Activated B cell treated with CpG ODN at 0.5 μM for 24 hours (primary cell): ENCODE measurements at regions of chr1 and their contacts with region 1.

Region 1: DNA sequence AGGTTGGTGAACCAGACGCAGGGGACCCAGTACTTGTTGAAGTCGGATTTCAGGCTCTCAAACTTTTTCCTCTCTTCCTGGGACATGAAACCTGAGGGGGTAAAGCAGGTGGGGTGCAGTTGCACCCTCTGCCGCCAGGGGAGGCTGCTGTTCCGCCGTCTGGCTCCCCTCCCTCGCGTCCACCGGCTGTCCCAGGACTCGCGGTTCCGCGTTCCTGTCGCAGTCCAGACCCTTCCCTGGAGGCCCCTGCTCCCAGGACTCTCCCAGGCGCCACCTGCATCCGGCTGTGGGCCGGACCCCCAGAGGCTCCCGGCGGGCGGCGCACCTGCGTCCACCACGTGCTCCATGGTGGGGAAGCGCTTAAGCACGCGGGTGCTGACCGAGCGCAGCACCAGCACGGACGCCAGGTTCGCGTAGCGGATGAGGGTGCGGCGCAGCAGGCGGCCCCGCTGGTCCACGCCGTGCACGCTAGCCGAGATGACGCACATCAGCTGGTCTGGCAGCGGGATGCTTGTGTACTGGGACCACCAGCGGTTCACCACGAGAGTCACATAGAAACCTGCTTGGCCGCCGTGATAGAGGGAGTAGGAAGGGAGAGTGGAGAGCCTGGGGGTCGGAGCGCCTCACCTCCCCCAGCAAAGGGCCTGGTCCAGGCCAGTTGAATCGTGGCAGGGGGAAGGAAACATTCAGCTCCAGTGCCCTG is 1.7 kb downstream of the BEST4 start:
- DNase-seq: peak; percentile 81
- ATAC-seq: peak; percentile 79
- H3K4me3 Mint-ChIP-seq: peak overlapping the region; percentile 75
- H3K27ac Mint-ChIP-seq: peak overlapping the region; percentile 86
- H3K4me1 Mint-ChIP-seq: peaks cover 32% of the 10 kb centered on the region
- H3K27me3 Mint-ChIP-seq: no peaks in the 10 kb centered on the region
- CTCF ChIP-seq: peak; percentile 100

Region 2: GRCh38 chr1:44025816-44026215 is 760.5 kb before region 1 on chr1:
- CTCF ChIA-PET with region 1: no interaction called
- POLR2A ChIA-PET with region 1: no interaction called
- intact Hi-C with region 1: no loop called
- DNase-seq: no peak
- ATAC-seq: no peak
- H3K4me3 Mint-ChIP-seq: peak overlapping the region; percentile 41
- H3K27ac Mint-ChIP-seq: peak overlapping the region; percentile 81
- H3K4me1 Mint-ChIP-seq: peaks cover 38% of the 10 kb centered on the region
- H3K27me3 Mint-ChIP-seq: no peaks in the 10 kb centered on the region
- CTCF ChIP-seq: no peak

Region 3: GRCh38 chr1:44684525-44684924 is 101.8 kb before region 1 on chr1:
- CTCF ChIA-PET with region 1: no interaction called
- POLR2A ChIA-PET with region 1: no interaction called
- intact Hi-C with region 1: no loop called
- DNase-seq: no peak
- ATAC-seq: no peak
- H3K4me3 Mint-ChIP-seq: no peak overlapping the region
- H3K27ac Mint-ChIP-seq: no peak overlapping the region
- H3K4me1 Mint-ChIP-seq: peaks cover 8% of the 10 kb centered on the region
- H3K27me3 Mint-ChIP-seq: no peaks in the 10 kb centered on the region
- CTCF ChIP-seq: no peak

Region 4: DNA sequence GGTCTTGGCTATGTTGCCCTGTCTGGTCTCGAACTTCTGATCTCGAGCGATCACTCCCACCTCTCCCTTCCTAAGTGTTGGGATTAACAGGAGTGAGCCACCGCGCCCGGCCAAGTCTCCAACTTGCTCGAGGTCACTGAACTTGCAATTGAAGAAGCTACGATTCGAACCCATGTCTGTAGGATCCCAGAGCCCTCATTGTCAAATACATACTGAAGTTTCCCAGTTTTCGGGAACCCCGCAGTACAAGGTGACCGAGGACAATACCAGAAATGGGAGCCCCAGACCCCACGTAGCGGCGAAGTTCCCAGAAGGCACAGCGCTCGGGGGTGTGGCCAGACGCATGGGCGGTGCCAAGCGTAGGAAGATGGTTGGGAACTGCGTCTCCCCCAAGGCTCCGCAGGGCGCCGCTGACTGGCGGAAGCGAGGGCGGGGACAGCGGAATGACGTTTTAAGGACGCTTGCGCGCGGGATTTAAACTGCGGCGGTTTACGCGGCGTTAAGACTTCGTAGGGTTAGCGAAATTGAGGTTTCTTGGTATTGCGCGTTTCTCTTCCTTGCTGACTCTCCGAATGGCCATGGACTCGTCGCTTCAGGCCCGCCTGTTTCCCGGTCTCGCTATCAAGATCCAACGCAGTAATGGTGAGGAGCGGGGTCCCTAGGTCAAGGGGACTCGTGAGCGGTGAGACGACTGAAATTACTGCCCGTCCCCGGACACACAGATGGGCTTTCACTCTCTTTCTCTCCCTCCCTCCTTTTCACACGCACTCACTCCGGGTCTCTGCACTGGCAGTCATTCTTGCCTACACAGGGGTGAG is 46.7 kb before region 1 on chr1 and contains the start of gene KIF2C:
- CTCF ChIA-PET with region 1: no interaction called
- POLR2A ChIA-PET with region 1: interaction called, 11 read pairs
- intact Hi-C with region 1: loop called (anchors 2 kb)
- DNase-seq: peak; percentile 94
- ATAC-seq: peak; percentile 100
- H3K4me3 Mint-ChIP-seq: peak within 1 kb of the TSS; percentile 93
- H3K27ac Mint-ChIP-seq: peak within 1 kb of the TSS; percentile 90
- H3K4me1 Mint-ChIP-seq: peaks cover 15% of the 10 kb centered on the region
- H3K27me3 Mint-ChIP-seq: no peaks in the 10 kb centered on the region
- CTCF ChIP-seq: no peak
- total RNA-seq, gene KIF2C: 1.00 and 1.8 TPM in 2 replicates

Region 5: DNA sequence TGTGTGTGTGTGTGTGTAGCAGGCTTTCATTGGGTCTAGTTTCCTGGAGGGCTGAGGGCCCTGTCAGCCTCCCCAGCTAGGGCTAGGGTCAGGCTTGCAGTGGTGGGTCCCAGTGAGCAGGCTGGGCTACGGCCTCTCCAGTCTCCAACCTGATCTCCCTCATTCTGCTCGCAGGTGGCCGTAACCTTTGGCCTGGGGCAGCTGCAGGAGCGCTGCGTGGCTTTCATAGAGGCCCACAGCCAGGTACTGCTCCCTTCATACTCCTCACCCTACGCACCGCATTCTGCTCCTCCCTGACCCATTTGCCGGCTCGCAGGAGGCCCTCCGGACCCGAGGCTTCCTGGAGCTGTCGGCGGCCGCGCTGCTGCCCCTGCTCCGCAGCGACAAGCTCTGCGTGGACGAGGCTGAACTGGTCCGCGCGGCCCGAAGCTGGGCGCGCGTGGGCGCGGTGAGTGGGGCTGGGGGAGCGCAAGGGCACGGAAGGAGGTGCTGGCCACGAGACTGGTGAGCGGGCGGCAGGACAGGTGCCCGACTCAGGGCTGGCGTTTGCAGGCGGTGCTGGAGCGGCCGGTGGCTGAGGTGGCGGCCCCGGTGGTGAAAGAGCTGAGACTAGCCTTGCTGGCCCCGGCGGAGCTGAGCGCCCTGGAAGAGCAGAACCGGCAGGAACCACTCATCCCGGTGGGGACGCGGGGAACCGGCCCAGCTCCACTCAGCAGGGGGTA is 26.7 kb after region 1 on chr1:
- CTCF ChIA-PET with region 1: interaction called, 6 read pairs
- POLR2A ChIA-PET with region 1: interaction called, 113 read pairs
- intact Hi-C with region 1: no loop called
- DNase-seq: no peak
- ATAC-seq: no peak
- H3K4me3 Mint-ChIP-seq: peak overlapping the region; percentile 11
- H3K27ac Mint-ChIP-seq: peak overlapping the region; percentile 50
- H3K4me1 Mint-ChIP-seq: peaks cover 63% of the 10 kb centered on the region
- H3K27me3 Mint-ChIP-seq: no peaks in the 10 kb centered on the region
- CTCF ChIP-seq: no peak

Region 6: DNA sequence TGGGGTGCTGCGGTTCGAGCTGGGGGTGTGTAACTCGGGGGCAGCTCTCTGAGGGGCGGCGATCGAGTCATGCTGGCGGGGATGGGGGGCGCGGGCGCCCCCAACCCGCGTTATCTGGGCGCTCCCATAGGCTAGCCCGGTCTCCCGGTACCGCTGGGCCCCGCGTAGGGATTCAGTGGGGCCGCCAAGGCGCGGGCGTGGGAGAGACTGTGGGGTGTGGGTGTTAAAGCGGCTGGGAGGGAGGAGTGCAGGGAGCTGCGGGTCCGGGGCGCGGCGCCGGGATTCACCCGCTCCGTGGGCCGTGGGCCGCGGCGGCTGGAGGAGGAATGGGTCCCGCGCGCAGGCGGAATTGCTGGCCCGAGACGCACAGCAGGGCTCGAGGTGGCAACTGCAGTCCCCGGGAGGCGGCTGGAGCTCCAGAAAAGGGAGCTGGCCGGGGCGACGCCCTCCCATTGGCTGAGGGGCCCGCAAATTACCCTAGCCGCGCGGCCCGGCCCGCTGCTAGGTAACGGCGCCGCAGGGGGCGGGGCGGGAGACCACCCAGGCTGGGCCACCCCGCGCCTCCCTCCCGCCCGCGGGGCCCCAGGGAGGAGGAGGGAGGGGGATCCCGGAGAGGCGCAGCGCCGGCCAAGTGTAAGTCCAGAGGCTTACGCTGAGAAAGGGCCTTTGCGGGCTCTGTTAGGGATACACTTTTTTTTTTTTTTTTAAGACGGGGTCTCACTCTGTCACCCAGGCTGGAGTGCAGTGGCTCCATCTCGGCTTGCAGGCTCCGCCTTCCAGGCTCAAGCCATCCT is 56.8 kb after region 1 on chr1 and contains the start of gene PTCH2:
- CTCF ChIA-PET with region 1: no interaction called
- POLR2A ChIA-PET with region 1: interaction called, 3 read pairs
- intact Hi-C with region 1: loop called (anchors 2 kb)
- DNase-seq: peak; percentile 48
- ATAC-seq: peak; percentile 78
- H3K4me3 Mint-ChIP-seq: peak within 1 kb of the TSS; percentile 64
- H3K27ac Mint-ChIP-seq: no peak within 1 kb of the TSS
- H3K4me1 Mint-ChIP-seq: peaks cover 6% of the 10 kb centered on the region
- H3K27me3 Mint-ChIP-seq: peaks cover 4% of the 10 kb centered on the region
- CTCF ChIP-seq: no peak
- total RNA-seq, gene PTCH2: 1.2 TPM in 2 replicates

Region 7: DNA sequence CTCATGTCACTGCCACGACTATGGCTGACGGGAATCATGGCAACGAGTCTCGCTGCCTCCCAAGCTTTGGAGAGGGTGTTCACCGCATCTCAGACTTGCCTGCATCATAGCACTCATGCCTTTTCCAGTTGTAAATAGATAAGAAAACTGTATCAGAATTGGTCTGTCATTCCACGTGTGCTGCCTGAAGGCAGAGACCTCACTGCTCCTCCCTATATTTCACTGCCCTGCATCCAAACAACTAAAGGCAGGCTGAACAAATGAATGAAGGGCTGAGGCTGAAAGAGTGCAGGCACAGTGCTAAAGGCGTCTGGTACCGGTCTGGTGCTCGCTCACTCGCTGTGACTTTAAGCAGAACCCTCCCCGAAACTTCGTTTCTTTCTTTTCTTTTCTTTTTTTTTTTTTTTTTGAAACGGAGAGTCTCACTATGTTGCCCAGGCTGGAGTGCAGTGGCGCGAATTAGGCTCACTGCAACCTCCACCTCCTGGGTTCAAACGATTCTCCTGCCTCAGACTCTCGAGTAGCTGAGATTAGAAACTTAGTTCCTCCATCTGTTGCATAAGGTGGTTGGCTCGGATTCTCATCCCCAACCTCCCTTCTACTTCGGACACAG is 199.6 kb after region 1 on chr1:
- CTCF ChIA-PET with region 1: no interaction called
- POLR2A ChIA-PET with region 1: interaction called, 10 read pairs
- intact Hi-C with region 1: loop called (anchors 5 kb)
- DNase-seq: no peak
- ATAC-seq: no peak
- H3K4me3 Mint-ChIP-seq: peak overlapping the region; percentile 100
- H3K27ac Mint-ChIP-seq: peak overlapping the region; percentile 94
- H3K4me1 Mint-ChIP-seq: peaks cover 23% of the 10 kb centered on the region
- H3K27me3 Mint-ChIP-seq: no peaks in the 10 kb centered on the region
- CTCF ChIP-seq: no peak

Region 8: GRCh38 chr1:45205910-45206721 is 419.8 kb after region 1 on chr1 and contains the start of gene ZSWIM5:
- CTCF ChIA-PET with region 1: no interaction called
- POLR2A ChIA-PET with region 1: no interaction called
- intact Hi-C with region 1: loop called (anchors 10 kb)
- DNase-seq: peak; percentile 64
- ATAC-seq: peak; percentile 79
- H3K4me3 Mint-ChIP-seq: peak within 1 kb of the TSS; percentile 84
- H3K27ac Mint-ChIP-seq: peak within 1 kb of the TSS; percentile 33
- H3K4me1 Mint-ChIP-seq: peaks cover 13% of the 10 kb centered on the region
- H3K27me3 Mint-ChIP-seq: peaks cover 22% of the 10 kb centered on the region
- CTCF ChIP-seq: no peak
- total RNA-seq, gene ZSWIM5: 1.6 and 2.3 TPM in 2 replicates